ENCODE measurements at regions of chr6 and their contacts with region 1.

Region 1: GRCh38 chr6:142885182-142885867 is 59.7 kb downstream of the HIVEP2 start:
- DNase-seq: peak in 7 of 9 experiments; percentile 13 to 93 (median 45)
- ATAC-seq: peak; percentile 81
- H3K4me3 ChIP-seq: peak overlapping the region; percentile 23 to 33
- H3K4me3 Mint-ChIP-seq: peak overlapping the region; percentile 90
- H3K27ac ChIP-seq: peak overlapping the region; percentile 71
- H3K27ac Mint-ChIP-seq: peak overlapping the region; percentile 99
- H3K4me1 ChIP-seq: peaks cover 70% of the 10 kb centered on the region
- H3K4me1 Mint-ChIP-seq: peaks cover 90% of the 10 kb centered on the region
- H3K27me3 ChIP-seq: no peaks in the 10 kb centered on the region
- H3K27me3 Mint-ChIP-seq: no peaks in the 10 kb centered on the region
- CTCF ChIP-seq: no peak

Region 2: GRCh38 chr6:142374965-142375733 is 510.2 kb before region 1 on chr6:
- CTCF ChIA-PET with region 1: no interaction called
- POLR2A ChIA-PET with region 1: no interaction called
- intact Hi-C with region 1: no loop called
- DNase-seq: no peak
- ATAC-seq: no peak
- H3K4me3 ChIP-seq: no peak overlapping the region
- H3K4me3 Mint-ChIP-seq: no peak overlapping the region
- H3K27ac ChIP-seq: no peak overlapping the region
- H3K27ac Mint-ChIP-seq: no peak overlapping the region
- H3K4me1 ChIP-seq: no peaks in the 10 kb centered on the region
- H3K4me1 Mint-ChIP-seq: peaks cover 2% of the 10 kb centered on the region
- H3K27me3 ChIP-seq: no peaks in the 10 kb centered on the region
- H3K27me3 Mint-ChIP-seq: peaks cover 3% of the 10 kb centered on the region
- CTCF ChIP-seq: no peak

Region 3: DNA sequence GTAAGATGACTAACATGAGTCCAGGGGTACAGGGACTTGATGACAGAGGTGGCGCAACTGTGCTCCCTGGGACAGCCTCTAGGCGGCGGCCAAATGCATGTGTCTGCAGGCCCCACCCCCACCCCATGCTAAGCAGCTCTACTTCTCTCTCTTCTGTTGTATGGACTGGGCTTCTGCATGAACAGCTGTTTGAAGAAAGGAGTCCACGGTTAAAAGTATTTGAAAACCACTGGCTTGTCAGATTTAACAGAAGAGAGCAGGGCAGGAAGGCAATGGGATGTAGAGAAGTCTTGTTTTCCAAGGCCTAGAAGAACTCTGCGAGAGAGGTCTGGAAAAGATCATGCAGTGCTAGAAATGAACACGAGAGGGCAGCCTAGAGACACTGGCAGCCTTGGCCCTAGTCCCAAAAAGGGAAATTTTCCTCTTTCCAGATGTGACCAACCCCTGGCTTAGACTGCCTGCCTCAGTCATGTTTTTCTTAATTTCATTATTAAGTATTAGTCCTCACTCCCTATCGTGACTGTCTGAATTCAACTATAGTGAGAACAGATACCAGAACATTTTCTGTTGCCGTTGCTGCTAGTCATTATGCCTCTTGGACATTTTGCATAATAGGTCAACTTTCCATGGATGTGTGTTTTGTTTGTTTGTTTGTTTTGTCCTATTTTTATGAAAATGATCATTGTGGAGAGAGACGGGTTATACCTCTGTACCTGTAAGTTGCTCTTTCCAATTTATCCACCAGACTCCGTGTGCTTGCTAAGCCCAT is 318.5 kb before region 1 on chr6:
- CTCF ChIA-PET with region 1: interaction called, 3 read pairs
- POLR2A ChIA-PET with region 1: no interaction called
- intact Hi-C with region 1: loop called in 1 of 2 experiments (anchors 10 kb)
- DNase-seq: peak; percentile 22 to 72 (median 58)
- ATAC-seq: peak; percentile 57
- H3K4me3 ChIP-seq: no peak overlapping the region
- H3K4me3 Mint-ChIP-seq: no peak overlapping the region
- H3K27ac ChIP-seq: no peak overlapping the region
- H3K27ac Mint-ChIP-seq: no peak overlapping the region
- H3K4me1 ChIP-seq: peaks cover 47% of the 10 kb centered on the region
- H3K4me1 Mint-ChIP-seq: peaks cover 61% of the 10 kb centered on the region
- H3K27me3 ChIP-seq: no peaks in the 10 kb centered on the region
- H3K27me3 Mint-ChIP-seq: no peaks in the 10 kb centered on the region
- CTCF ChIP-seq: peak; percentile 75

Region 4: DNA sequence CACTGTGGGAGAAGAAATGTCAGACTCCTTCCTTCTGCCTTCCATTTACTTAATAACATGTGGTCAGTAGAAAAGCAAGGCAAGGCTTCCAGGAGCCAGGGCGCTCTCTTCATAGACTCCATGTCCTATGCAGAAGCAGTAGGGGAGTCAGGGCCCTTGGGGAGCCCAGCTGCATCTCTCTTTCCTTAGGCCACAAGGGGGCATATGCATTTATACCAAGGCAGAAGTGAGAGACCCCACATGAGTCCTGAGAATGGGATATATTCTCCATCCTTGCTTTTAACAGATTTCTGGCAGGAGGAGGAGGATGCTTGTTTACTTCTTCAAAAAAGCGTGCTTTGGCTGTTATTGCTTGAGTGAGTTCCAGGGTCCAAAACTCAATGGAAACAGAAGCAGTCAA is 138.8 kb before region 1 on chr6:
- CTCF ChIA-PET with region 1: interaction called, 5 read pairs
- POLR2A ChIA-PET with region 1: no interaction called
- intact Hi-C with region 1: loop called in 1 of 2 experiments (anchors 1 kb)
- DNase-seq: peak in 8 of 9 experiments; percentile 6 to 71 (median 39)
- ATAC-seq: peak; percentile 58
- H3K4me3 ChIP-seq: no peak overlapping the region
- H3K4me3 Mint-ChIP-seq: no peak overlapping the region
- H3K27ac ChIP-seq: no peak overlapping the region
- H3K27ac Mint-ChIP-seq: no peak overlapping the region
- H3K4me1 ChIP-seq: peaks cover 6% of the 10 kb centered on the region
- H3K4me1 Mint-ChIP-seq: peaks cover 15% of the 10 kb centered on the region
- H3K27me3 ChIP-seq: no peaks in the 10 kb centered on the region
- H3K27me3 Mint-ChIP-seq: no peaks in the 10 kb centered on the region
- CTCF ChIP-seq: peak; percentile 42

Region 5: GRCh38 chr6:142827369-142827768 is 58.0 kb before region 1 on chr6:
- CTCF ChIA-PET with region 1: no interaction called
- POLR2A ChIA-PET with region 1: no interaction called
- intact Hi-C with region 1: no loop called
- DNase-seq: no peak
- ATAC-seq: no peak
- H3K4me3 ChIP-seq: no peak overlapping the region
- H3K4me3 Mint-ChIP-seq: no peak overlapping the region
- H3K27ac ChIP-seq: no peak overlapping the region
- H3K27ac Mint-ChIP-seq: peak overlapping the region; percentile 55
- H3K4me1 ChIP-seq: peaks cover 3% of the 10 kb centered on the region
- H3K4me1 Mint-ChIP-seq: peaks cover 79% of the 10 kb centered on the region
- H3K27me3 ChIP-seq: no peaks in the 10 kb centered on the region
- H3K27me3 Mint-ChIP-seq: no peaks in the 10 kb centered on the region
- CTCF ChIP-seq: no peak

Region 6: DNA sequence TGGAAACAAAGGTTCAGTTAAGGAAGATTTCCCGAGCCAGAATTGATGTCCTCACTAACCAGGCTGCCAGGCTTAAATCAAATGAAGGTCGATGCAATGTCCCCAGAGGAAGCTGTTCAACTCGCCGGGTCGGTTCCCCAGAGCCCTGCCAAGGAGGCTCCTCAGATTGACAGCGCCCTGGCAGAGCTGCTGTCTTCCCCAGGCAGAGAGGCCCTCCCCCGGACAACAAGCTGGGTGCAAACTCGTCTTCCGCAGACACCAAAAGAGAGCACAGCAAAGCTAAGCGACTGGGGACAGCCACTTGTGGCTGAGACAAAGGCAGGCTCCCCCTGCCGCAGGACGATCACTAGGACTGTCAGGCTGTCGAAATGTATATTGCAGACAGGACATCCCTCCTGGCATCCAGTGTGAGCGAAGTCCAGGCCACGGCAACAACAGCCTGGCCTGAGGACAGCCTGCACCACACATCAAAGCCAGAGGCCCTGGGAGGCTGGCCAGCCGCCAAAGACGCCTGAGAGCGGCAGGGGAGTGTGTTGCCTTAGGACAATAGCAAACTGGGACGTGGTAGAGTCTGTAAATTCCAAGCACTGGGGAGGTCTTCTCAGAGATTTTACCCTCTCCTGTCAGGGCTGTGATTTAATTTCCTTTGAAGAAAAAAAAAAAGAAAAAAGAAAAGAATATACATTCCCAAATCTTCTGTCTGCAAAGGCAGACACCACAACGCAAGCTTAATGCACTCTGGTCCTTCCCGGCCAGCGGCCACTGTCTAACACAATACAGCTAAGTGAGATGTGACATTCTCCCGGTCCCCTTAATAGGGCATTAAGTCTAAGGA is 39.5 kb before region 1 on chr6:
- CTCF ChIA-PET with region 1: interaction called, 6 read pairs
- POLR2A ChIA-PET with region 1: interaction called, 5 read pairs
- intact Hi-C with region 1: loop called (anchors 1 to 2 kb)
- DNase-seq: peak in 8 of 9 experiments; percentile 42 to 84 (median 72)
- ATAC-seq: peak; percentile 43
- H3K4me3 ChIP-seq: peak overlapping the region; percentile 43 to 48
- H3K4me3 Mint-ChIP-seq: peak overlapping the region; percentile 87
- H3K27ac ChIP-seq: peak overlapping the region; percentile 66 to 82
- H3K27ac Mint-ChIP-seq: peak overlapping the region; percentile 97
- H3K4me1 ChIP-seq: peaks cover 80% of the 10 kb centered on the region
- H3K4me1 Mint-ChIP-seq: peaks cover 92% of the 10 kb centered on the region
- H3K27me3 ChIP-seq: no peaks in the 10 kb centered on the region
- H3K27me3 Mint-ChIP-seq: no peaks in the 10 kb centered on the region
- CTCF ChIP-seq: no peak

Region 7: DNA sequence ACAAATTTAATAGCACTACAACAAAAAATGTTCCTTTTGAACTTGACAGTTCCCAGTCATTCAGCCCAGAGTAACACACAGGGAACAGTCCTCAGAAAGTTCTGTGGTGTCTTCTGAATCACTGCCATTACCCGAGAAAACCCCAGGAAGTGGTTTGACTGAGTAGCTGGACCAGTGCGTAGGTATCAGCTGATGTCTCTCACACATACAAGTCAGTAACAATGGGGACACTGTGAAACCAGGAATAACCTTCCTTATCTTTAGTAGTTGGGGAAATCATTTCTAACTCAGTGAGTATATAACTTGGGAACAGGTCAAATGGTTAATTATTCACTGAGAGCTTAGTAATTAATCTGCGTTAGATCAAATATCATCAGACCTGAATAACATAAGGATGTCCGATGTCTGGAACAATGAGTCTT is 13.4 kb before region 1 on chr6:
- CTCF ChIA-PET with region 1: interaction called, 13 read pairs
- POLR2A ChIA-PET with region 1: interaction called, 9 read pairs
- intact Hi-C with region 1: loop called in 1 of 2 experiments (anchors 1 kb)
- DNase-seq: peak in 7 of 9 experiments; percentile 35 to 90 (median 60)
- ATAC-seq: peak; percentile 85
- H3K4me3 ChIP-seq: no peak overlapping the region
- H3K4me3 Mint-ChIP-seq: no peak overlapping the region
- H3K27ac ChIP-seq: peak overlapping the region; percentile 25 to 39
- H3K27ac Mint-ChIP-seq: peak overlapping the region; percentile 93
- H3K4me1 ChIP-seq: peaks cover 70% of the 10 kb centered on the region
- H3K4me1 Mint-ChIP-seq: peaks cover 89% of the 10 kb centered on the region
- H3K27me3 ChIP-seq: no peaks in the 10 kb centered on the region
- H3K27me3 Mint-ChIP-seq: no peaks in the 10 kb centered on the region
- CTCF ChIP-seq: no peak

Region 8: DNA sequence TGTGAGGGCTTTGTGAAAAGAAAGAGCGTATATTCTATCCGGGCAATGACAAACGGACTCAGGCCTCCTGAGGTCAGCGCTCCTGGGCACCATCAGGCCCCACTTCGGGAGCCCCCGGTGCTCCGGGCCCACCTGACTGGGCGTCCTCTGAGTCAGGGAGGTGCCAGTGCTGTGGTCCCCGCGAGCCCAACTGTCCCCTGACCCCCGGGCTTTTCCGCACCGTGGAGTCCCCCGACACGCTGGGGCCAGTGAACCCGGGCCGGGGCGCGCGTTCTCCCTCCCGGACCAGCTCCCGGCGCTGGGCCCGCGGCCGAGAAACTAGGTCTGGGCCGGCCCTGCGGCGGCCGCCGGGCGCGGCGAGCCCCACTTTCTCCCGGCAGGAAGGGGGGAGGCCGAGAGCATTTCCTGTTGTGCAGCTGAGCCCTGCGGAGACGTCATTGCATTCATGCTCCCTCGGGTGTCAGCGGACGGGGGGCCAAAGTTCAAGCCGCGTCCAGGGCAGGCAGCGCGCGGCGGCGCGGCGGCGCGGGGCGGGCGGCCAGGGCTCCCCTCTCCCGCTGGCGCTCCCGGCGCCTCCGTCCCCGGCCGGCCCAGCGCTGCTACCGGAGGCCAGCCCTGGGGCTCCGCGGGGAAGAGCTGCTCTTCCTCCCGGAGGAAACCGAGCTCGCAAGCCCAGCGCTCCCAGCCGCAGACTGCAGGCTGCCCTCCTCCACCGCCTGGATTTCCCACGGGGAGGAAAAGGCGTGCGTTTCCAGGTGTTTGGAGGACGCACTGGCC is 41.4 kb after region 1 on chr6:
- CTCF ChIA-PET with region 1: interaction called, 5 read pairs
- POLR2A ChIA-PET with region 1: interaction called, 14 read pairs
- intact Hi-C with region 1: loop called (anchors 1 to 2 kb)
- DNase-seq: peak; percentile 68 to 93 (median 81)
- ATAC-seq: peak; percentile 81
- H3K4me3 ChIP-seq: peak overlapping the region; percentile 76 to 86
- H3K4me3 Mint-ChIP-seq: peak overlapping the region; percentile 91
- H3K27ac ChIP-seq: peak overlapping the region; percentile 99
- H3K27ac Mint-ChIP-seq: peak overlapping the region; percentile 98
- H3K4me1 ChIP-seq: peaks cover 47% of the 10 kb centered on the region
- H3K4me1 Mint-ChIP-seq: peaks cover 63% of the 10 kb centered on the region
- H3K27me3 ChIP-seq: no peaks in the 10 kb centered on the region
- H3K27me3 Mint-ChIP-seq: no peaks in the 10 kb centered on the region
- CTCF ChIP-seq: no peak

Region 9: DNA sequence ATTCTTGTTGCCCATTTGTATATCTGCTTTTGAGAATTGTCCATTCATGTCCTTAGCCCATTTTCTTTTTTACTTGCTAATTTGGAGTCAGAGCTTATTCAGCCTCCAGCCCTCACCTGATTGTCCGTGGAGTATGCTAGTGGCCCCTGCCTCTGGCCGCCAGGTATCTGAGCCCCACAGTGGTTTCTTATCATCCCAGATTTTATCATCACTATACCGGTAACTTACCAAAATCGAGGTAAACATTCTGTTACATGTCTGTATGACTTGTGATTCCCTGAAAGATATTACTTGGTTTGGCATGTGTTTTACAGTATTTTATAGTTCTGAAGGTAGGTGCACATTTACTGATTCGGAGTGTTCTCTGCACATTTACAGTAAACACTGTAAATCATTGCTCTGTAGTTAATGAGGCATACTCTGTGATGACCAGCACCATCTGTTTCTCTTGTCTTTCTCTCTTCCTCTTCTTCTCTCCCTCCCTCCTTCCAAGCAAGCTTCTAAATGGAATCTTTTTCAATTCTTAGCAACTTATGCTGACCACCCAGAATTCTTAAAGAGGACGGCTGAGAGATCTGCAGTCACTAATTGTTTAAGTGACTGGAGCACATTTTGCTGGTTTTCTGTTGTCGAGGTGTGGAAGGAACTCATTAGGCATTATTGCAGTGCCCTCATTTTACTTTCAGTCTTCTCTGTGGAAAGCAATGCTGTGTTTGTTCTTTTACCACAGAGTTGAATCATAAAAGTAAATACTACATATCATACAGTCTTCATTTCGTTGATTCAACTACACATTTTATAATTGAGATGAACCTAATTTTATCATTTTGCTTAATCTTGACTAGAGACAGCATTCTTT is 1526.2 kb after region 1 on chr6:
- CTCF ChIA-PET with region 1: no interaction called
- POLR2A ChIA-PET with region 1: no interaction called
- intact Hi-C with region 1: no loop called
- DNase-seq: peak in 2 of 9 experiments; percentile 5 to 17
- ATAC-seq: peak; percentile 69
- H3K4me3 ChIP-seq: no peak overlapping the region
- H3K4me3 Mint-ChIP-seq: peak overlapping the region; percentile 72
- H3K27ac ChIP-seq: no peak overlapping the region
- H3K27ac Mint-ChIP-seq: peak overlapping the region; percentile 87
- H3K4me1 ChIP-seq: peaks cover 12% of the 10 kb centered on the region
- H3K4me1 Mint-ChIP-seq: peaks cover 75% of the 10 kb centered on the region
- H3K27me3 ChIP-seq: no peaks in the 10 kb centered on the region
- H3K27me3 Mint-ChIP-seq: no peaks in the 10 kb centered on the region
- CTCF ChIP-seq: no peak

Measured in CD8-positive, alpha-beta T cell (primary cell).